ENCODE measurements at regions of chr20 and their contacts with region 1.

Region 1: DNA sequence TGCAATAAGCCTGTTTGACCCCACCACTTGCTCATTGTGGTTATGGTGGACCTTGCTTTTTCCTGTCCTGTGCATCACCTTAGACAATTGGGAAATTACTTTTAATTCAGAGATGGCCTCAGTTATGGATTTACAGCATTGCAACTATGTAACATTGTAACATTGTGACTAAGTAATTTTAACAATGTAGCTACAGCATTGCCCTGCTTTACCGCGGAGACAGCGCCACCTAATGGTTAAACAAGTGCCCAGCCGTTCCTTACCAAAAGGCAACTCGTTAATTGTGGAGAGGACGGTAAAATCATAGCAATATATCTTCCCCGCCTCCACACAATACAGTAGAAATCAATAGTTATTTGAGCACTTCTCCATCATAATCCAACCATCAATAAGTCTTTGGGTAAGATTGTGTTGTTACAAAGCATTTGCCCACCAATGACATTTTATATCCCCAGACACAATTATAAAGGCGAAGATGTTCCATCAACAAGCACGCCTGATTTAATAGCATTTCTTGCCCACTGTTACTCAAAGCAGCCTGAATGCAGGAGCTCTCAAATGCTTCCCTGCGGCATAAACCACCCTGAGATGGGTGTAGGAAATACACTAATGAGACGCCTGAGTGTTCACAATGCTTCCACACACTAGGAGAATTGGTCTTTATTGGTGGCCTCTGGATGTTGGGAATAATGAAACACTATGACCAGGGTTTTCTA is 93.7 kb downstream of the PROKR2 start:
- DNase-seq: peak; percentile 64
- H3K4me3 ChIP-seq: no peak overlapping the region
- H3K27ac ChIP-seq: no peak overlapping the region
- H3K4me1 ChIP-seq: no peaks in the 10 kb centered on the region
- H3K27me3 ChIP-seq: peaks cover 0 to 3% of the 10 kb centered on the region in 2 experiments
- CTCF ChIP-seq: peak; percentile 84 to 93
- POLR2A ChIP-seq: no peak

Region 2: GRCh38 chr20:5150226-5151076 is 72.6 kb before region 1 on chr20:
- CTCF ChIA-PET with region 1: no interaction called
- POLR2A ChIA-PET with region 1: no interaction called
- dilution Hi-C with region 1: no loop called
- intact Hi-C with region 1: no loop called
- DNase-seq: no peak
- H3K4me3 ChIP-seq: no peak overlapping the region
- H3K27ac ChIP-seq: no peak overlapping the region
- H3K4me1 ChIP-seq: peaks cover 7% of the 10 kb centered on the region
- H3K27me3 ChIP-seq: no peaks in the 10 kb centered on the region
- CTCF ChIP-seq: no peak
- POLR2A ChIP-seq: no peak

Region 3: GRCh38 chr20:5205348-5206210 is 17.5 kb before region 1 on chr20:
- CTCF ChIA-PET with region 1: interaction called, 275 read pairs
- POLR2A ChIA-PET with region 1: no interaction called
- dilution Hi-C with region 1: no loop called
- intact Hi-C with region 1: loop called (anchors 1 kb)
- DNase-seq: peak; percentile 78
- H3K4me3 ChIP-seq: no peak overlapping the region
- H3K27ac ChIP-seq: no peak overlapping the region
- H3K4me1 ChIP-seq: no peaks in the 10 kb centered on the region
- H3K27me3 ChIP-seq: no peaks in the 10 kb centered on the region
- CTCF ChIP-seq: peak; percentile 93
- POLR2A ChIP-seq: no peak

Region 4: DNA sequence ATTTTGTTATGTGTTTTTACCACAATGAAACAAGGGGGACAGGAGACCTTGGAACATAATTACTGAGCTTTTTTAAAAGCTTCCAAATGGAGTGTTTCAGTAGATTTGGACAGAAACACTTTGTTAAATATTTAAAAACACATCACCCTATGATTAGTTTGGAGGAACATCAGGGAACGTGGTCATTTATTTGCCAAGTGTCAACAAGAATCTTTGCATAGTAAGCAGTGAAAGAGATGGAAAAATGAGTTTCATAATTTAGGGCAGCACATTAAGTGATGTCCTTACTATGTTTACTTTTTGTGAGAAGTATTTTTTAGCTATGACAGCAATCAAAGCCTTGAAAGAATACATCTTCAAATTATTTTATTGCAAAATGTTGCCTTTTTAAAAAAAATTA is 11.1 kb after region 1 on chr20:
- CTCF ChIA-PET with region 1: interaction called, 13 read pairs
- POLR2A ChIA-PET with region 1: no interaction called
- dilution Hi-C with region 1: no loop called
- intact Hi-C with region 1: no loop called
- DNase-seq: no peak
- H3K4me3 ChIP-seq: no peak overlapping the region
- H3K27ac ChIP-seq: no peak overlapping the region
- H3K4me1 ChIP-seq: no peaks in the 10 kb centered on the region
- H3K27me3 ChIP-seq: peaks cover 3 to 15% of the 10 kb centered on the region in 2 experiments
- CTCF ChIP-seq: no peak
- POLR2A ChIP-seq: no peak

Region 5: DNA sequence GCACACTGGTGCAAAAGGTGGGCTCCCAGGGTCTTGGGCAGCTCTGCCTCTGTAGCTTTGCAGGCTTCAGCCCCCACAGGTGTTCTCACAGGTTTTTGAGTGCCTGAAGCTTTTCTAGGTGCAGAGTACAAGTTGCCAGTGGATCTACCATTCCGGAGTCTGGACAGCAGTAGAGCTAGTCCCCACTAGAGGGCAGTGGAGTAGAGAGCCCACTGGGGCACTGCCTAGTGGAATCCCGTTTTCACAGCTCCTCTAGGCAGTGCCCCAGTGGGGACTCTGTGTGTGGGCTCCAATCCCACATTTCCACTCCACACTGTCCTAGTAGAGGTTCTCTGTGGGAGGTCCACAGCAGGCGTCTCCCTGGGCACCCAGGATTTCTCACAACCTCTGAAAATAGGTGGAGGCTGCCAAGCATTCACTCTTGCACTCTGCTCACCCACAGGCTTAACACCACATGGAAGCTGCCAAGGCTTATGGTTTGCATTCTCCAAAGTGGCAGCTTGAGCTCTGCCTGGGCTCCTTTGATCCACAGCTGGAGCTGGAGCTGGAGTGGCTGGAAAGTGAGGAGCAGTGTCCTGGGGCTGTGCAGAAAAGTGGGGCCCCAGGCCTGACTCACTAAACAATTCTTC is 179.9 kb after region 1 on chr20:
- CTCF ChIA-PET with region 1: interaction called, 4 read pairs
- POLR2A ChIA-PET with region 1: no interaction called
- dilution Hi-C with region 1: no loop called
- intact Hi-C with region 1: loop called (anchors 5 kb)
- DNase-seq: peak; percentile 30
- H3K4me3 ChIP-seq: no peak overlapping the region
- H3K27ac ChIP-seq: no peak overlapping the region
- H3K4me1 ChIP-seq: no peaks in the 10 kb centered on the region
- H3K27me3 ChIP-seq: no peaks in the 10 kb centered on the region
- CTCF ChIP-seq: peak; percentile 55 to 81
- POLR2A ChIP-seq: no peak